Endothelial cell of umbilical vein (primary cell): ENCODE measurements at regions of chr15 and their contacts with region 1.

Region 1: DNA sequence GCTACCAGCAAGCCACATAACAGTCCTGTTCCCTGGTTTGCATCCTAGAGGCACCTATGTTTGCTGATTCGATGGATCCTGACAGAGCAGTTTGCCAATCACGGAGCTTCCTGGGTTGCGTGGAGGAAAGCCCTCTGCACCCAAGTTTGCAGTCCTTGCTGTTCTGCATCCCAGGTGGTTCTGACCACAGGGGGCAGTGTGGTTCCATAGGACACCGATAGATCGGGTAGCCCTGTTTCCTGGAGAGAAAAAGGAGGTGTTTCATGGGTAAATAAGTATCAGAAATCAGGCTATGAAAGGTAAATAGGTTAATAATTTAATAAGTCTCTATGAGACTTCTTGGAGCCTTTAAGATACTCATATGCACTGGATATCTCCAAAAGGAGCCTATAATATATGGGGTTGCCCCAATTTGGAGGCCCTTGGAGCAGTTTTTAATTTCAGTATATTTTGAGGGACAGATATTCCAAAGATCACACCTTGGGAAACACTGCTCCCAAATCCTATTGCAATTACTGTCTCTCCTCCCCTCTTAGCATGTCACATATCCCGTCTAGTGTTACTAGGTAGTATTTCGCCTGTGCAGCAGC is 194.6 kb upstream of the TPM1 start:
- DNase-seq: peak; percentile 65
- H3K4me3 ChIP-seq: no peak overlapping the region
- H3K27ac ChIP-seq: peak overlapping the region; percentile 44
- H3K4me1 ChIP-seq: peaks cover 39% of the 10 kb centered on the region
- H3K27me3 ChIP-seq: no peaks in the 10 kb centered on the region
- CTCF ChIP-seq: peak; percentile 57 to 73
- POLR2A ChIP-seq: no peak

Region 2: DNA sequence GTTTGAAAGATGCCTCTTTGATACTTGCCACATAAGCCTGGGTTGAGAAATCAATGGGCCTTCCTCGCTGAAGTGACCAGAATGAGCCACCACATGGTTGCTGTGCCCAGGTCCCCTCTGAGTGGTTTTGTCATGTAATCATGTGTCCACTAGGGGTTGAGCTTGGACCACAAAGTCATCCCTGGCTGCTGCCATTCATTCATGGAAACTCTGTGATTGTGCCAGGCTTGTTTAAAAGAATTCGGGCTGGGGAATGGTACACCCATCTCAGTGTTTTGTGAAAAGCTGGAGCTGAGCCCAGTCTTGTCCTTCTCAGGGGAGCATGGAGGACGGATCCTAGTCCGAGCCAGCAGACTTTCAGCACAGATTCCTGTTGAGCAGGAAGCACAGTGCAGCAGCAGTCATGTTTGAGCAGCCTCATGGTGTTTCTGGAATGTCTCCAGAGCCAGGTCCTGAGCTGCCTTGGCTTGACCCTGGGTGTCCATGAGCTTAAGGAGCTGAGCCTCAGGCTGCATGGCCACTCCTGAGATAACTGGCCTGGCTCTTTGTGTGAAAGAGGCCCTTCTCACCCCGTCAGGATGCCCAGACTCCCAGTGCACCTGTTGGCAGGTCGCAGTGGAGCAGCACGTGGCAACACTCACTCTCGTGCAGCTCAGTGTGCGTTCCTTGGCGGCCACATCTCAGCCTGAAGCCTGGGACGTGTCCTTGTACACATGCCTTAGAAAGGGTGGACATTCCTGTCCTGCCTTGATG is 65.8 kb before region 1 on chr15:
- CTCF ChIA-PET with region 1: interaction called, 14 read pairs
- POLR2A ChIA-PET with region 1: no interaction called
- dilution Hi-C with region 1: no loop called
- intact Hi-C with region 1: loop called (anchors 1 kb)
- DNase-seq: peak; percentile 90
- H3K4me3 ChIP-seq: no peak overlapping the region
- H3K27ac ChIP-seq: no peak overlapping the region
- H3K4me1 ChIP-seq: peaks cover 8% of the 10 kb centered on the region
- H3K27me3 ChIP-seq: no peaks in the 10 kb centered on the region
- CTCF ChIP-seq: peak; percentile 73 to 77
- POLR2A ChIP-seq: no peak

Region 3: GRCh38 chr15:63048115-63048775 is 200.2 kb after region 1 on chr15:
- CTCF ChIA-PET with region 1: interaction called, 52 read pairs
- POLR2A ChIA-PET with region 1: interaction called, 17 read pairs
- dilution Hi-C with region 1: no loop called
- intact Hi-C with region 1: loop called (anchors 1 kb)
- DNase-seq: peak; percentile 94
- H3K4me3 ChIP-seq: peak overlapping the region; percentile 72 to 87 (median 78)
- H3K27ac ChIP-seq: peak overlapping the region; percentile 68
- H3K4me1 ChIP-seq: peaks cover 81% of the 10 kb centered on the region
- H3K27me3 ChIP-seq: no peaks in the 10 kb centered on the region
- CTCF ChIP-seq: peak; percentile 92 to 95
- POLR2A ChIP-seq: peak; percentile 66

Region 4: DNA sequence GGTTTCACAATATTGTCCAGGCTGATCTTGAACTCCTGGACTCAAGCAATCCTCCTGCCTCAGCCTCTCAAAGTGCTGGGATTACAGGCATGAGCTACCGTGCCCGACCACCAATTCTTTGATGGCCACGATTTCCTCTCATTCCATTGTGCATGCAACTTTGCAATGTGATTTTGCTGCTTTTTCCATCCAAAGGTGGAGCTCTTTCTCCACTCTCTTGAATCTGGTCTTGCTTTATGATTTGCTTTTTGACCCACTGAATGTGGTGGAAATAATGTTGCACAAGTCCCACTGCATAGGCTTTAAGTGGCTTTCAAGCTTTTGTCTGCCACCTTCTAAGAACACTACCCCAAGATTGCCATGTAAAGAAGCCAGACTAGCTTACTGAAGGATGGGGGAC is 298.7 kb after region 1 on chr15:
- CTCF ChIA-PET with region 1: no interaction called
- POLR2A ChIA-PET with region 1: no interaction called
- dilution Hi-C with region 1: no loop called
- intact Hi-C with region 1: no loop called
- DNase-seq: peak; percentile 32
- H3K4me3 ChIP-seq: no peak overlapping the region
- H3K27ac ChIP-seq: no peak overlapping the region
- H3K4me1 ChIP-seq: no peaks in the 10 kb centered on the region
- H3K27me3 ChIP-seq: no peaks in the 10 kb centered on the region
- CTCF ChIP-seq: peak in 1 of 2 donors; percentile 1
- POLR2A ChIP-seq: no peak

Region 5: GRCh38 chr15:63234451-63234870 is 386.5 kb after region 1 on chr15:
- CTCF ChIA-PET with region 1: no interaction called
- POLR2A ChIA-PET with region 1: no interaction called
- dilution Hi-C with region 1: no loop called
- intact Hi-C with region 1: loop called (anchors 5 kb)
- DNase-seq: peak; percentile 89
- H3K4me3 ChIP-seq: no peak overlapping the region
- H3K27ac ChIP-seq: peak overlapping the region; percentile 91
- H3K4me1 ChIP-seq: peaks cover 52% of the 10 kb centered on the region
- H3K27me3 ChIP-seq: no peaks in the 10 kb centered on the region
- CTCF ChIP-seq: no peak
- POLR2A ChIP-seq: no peak